ENCODE measurements at regions of chr5 and their contacts with region 1.

Region 1: GRCh38 chr5:127517480-127518318 is at the start of gene PRRC1:
- DNase-seq: peak; percentile 90
- ATAC-seq: peak; percentile 95
- H3K4me3 Mint-ChIP-seq: peak within 1 kb of the TSS; percentile 80
- H3K27ac Mint-ChIP-seq: peak within 1 kb of the TSS; percentile 77
- H3K4me1 Mint-ChIP-seq: peaks cover 28% of the 10 kb centered on the region
- H3K27me3 Mint-ChIP-seq: no peaks in the 10 kb centered on the region
- total RNA-seq, gene PRRC1: 35.8 to 47.1 TPM

Region 2: DNA sequence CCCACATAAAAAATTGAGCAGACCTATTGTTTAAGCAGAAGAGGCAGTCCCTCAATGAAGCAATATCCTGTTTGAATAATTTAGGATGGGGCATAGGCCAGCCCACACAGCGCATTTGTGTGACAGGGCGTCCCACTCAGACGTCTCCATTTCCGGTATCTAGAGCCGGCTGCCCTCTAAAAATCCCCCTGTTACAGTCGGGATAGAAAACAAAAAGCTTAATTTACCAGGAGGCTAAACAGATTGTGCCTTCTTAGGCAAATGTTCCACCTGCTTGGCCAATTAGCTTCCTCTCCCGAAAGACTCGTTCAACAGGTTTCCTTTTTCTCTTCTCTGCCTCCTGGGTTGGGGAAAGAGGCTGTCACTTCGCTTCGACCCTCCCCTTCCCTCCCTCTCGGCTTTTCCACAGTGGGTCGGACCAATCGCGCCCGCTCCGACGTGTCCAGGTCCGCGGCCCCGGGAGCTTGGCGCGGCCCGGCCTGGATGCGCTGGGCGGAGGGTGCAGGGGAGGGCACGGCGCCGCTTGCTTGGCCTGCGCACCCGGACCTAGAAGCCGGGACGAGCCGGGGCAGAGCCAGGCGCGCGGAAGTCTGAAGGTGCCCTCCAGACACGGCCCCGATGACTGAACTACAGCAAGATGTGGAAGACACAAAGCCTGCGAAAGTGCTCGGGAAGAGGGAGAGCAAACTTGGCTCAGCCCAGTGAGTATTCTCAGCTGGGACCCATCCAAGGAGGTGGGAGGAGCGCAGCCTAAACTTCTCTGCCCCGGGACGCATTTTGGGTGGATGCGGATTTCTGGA is 1094.5 kb before region 1 on chr5 and contains the start of gene GRAMD2B:
- CTCF ChIA-PET with region 1: no interaction called
- POLR2A ChIA-PET with region 1: no interaction called
- intact Hi-C with region 1: loop called in 1 of 2 experiments (anchors 5 kb)
- DNase-seq: peak; percentile 82
- ATAC-seq: peak; percentile 86
- H3K4me3 Mint-ChIP-seq: peak within 1 kb of the TSS; percentile 87
- H3K27ac Mint-ChIP-seq: peak within 1 kb of the TSS; percentile 90
- H3K4me1 Mint-ChIP-seq: peaks cover 40% of the 10 kb centered on the region
- H3K27me3 Mint-ChIP-seq: no peaks in the 10 kb centered on the region
- total RNA-seq, gene GRAMD2B: 9.7 to 13.9 TPM

Region 3: DNA sequence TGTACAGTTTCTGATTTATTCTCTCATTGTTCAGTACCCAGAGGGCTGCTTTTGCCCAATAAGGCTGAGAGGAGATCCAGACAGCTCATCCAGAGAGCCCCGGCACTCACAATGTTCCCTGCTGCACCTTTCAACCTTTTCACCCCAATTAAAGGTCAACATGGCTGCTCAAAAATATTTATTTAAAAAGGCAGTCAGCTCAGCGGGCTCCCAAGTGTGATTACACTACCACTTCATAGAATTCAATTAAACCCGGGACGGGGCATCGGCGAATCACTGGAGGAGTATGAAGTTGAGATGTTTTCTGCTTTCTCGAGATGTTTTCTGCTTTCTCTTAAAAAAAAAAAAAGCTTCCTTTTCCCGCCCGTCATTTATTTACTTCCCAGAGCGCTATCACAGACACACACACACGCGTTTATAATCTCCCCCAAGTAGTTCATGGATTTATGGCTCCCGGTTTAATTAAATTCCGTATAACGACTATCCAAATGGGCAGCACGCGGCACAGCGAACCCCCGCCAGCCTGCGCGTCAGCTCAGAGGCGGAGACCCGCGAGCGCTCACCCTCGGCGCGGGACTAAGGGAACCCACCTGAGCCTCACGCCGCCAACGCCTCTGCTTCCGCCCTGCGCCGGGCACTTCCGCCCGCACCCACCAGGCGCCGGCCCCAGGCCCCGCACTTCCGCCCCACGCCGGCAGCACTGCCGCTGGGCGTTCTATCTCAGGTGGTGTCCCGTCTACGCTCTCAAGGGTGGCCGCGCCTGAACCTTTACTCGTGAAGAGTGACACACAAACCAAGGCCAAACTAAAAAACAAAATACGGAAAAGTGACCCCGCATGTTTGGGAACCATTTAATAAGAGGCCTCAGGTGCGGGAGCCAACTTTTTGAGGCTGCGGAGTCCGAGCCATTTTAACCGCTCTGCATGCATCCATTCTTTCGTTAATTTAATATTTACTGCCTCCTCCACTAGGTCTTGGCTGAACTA is 444.5 kb before region 1 on chr5 and contains the start of gene C5orf63:
- CTCF ChIA-PET with region 1: no interaction called
- POLR2A ChIA-PET with region 1: no interaction called
- intact Hi-C with region 1: loop called in 1 of 2 experiments (anchors 2 kb)
- DNase-seq: peak; percentile 87
- ATAC-seq: peak; percentile 98
- H3K4me3 Mint-ChIP-seq: peak within 1 kb of the TSS; percentile 86
- H3K27ac Mint-ChIP-seq: peak within 1 kb of the TSS; percentile 97
- H3K4me1 Mint-ChIP-seq: peaks cover 9% of the 10 kb centered on the region
- H3K27me3 Mint-ChIP-seq: no peaks in the 10 kb centered on the region
- total RNA-seq, gene C5orf63: 12.0 to 14.2 TPM

Region 4: DNA sequence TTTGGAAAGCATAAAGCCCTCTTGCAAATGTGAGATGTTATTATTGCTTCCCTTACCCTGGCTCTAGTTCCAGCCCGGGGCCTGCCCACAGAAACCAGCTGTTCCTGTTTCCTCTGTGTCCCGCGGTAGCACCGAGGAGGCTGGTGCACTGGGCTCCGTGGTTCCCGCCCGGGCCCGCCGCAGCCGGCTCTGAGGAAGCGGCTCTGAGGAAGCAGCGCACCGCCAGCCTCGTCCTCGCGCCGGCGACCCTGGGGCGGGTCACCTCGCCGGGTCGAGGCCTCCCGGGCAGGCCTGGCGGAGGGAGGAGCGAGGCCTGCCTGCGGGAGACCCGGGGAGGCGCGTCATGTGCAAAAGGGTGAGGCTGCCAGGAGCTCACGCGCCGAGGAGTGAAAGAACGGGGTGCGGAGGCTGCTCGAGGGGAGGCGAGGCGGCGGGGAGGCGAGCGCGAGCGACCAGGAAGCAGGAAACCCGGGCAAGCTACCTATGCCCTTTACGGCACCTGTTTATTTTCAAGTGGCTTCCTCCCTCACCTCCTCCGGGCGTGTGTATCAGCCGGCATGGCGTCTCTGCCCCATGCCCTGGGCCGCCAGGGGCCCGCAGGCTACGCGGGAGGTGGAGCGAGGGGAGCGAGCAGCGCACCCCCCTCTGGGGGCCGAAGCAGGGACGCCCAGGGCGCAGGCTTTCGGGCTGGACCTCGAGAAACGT is 288.4 kb before region 1 on chr5:
- CTCF ChIA-PET with region 1: no interaction called
- POLR2A ChIA-PET with region 1: no interaction called
- intact Hi-C with region 1: loop called in 1 of 2 experiments (anchors 2 kb)
- DNase-seq: peak; percentile 68
- ATAC-seq: peak; percentile 83
- H3K4me3 Mint-ChIP-seq: peak overlapping the region; percentile 56
- H3K27ac Mint-ChIP-seq: peak overlapping the region; percentile 44
- H3K4me1 Mint-ChIP-seq: peaks cover 18% of the 10 kb centered on the region
- H3K27me3 Mint-ChIP-seq: no peaks in the 10 kb centered on the region

Region 5: GRCh38 chr5:127423173-127423798 is 94.4 kb before region 1 on chr5:
- CTCF ChIA-PET with region 1: no interaction called
- POLR2A ChIA-PET with region 1: no interaction called
- intact Hi-C with region 1: no loop called
- DNase-seq: no peak
- ATAC-seq: peak; percentile 30
- H3K4me3 Mint-ChIP-seq: no peak overlapping the region
- H3K27ac Mint-ChIP-seq: no peak overlapping the region
- H3K4me1 Mint-ChIP-seq: peaks cover 1% of the 10 kb centered on the region
- H3K27me3 Mint-ChIP-seq: no peaks in the 10 kb centered on the region

Region 6: GRCh38 chr5:127639828-127640227 is 122.1 kb after region 1 on chr5:
- CTCF ChIA-PET with region 1: no interaction called
- POLR2A ChIA-PET with region 1: no interaction called
- intact Hi-C with region 1: no loop called
- DNase-seq: no peak
- ATAC-seq: no peak
- H3K4me3 Mint-ChIP-seq: no peak overlapping the region
- H3K27ac Mint-ChIP-seq: no peak overlapping the region
- H3K4me1 Mint-ChIP-seq: no peaks in the 10 kb centered on the region
- H3K27me3 Mint-ChIP-seq: peaks cover 13% of the 10 kb centered on the region

Region 7: DNA sequence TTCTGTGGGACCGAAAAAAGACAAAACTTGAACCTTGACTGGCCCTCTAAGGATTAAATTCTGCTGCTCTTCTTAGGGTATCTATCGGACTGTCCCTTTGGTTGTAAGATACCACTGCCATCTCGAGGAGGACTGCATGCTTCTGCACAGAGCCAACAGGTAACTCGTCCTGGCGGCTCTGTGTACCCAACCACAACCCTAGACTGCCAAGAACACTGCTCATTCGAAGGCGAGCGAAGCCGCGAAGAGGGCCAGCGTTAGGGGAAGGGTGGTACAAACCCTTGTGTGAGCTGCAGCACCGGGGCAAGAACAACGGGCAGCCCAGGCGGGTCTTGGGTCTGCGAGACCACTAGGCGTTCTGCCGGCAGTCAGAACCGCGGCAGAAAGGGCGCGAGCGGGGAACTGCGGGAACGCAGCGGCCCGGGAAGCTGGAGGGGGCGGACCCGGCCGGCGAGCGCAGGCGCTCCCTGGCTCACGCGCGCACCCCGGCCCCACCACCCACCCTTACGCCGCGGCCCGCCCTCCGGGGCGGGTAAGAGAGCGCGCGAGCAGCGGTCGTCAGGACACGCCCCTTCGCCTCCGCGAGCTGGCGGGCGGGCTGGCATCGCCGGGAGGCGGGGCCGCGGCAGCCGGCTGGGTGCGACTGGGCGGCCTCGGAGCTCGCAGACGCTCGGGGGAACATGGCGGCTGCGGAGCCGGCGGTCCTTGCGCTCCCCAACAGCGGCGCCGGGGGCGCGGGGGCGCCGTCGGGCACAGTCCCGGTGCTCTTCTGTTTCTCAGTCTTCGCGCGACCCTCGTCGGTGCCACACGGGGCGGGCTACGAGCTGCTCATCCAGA is 1576.6 kb after region 1 on chr5 and contains the start of gene ISOC1:
- CTCF ChIA-PET with region 1: no interaction called
- POLR2A ChIA-PET with region 1: no interaction called
- intact Hi-C with region 1: loop called in 1 of 2 experiments (anchors 5 kb)
- DNase-seq: peak; percentile 95
- ATAC-seq: peak; percentile 94
- H3K4me3 Mint-ChIP-seq: peak within 1 kb of the TSS; percentile 79
- H3K27ac Mint-ChIP-seq: peak within 1 kb of the TSS; percentile 37
- H3K4me1 Mint-ChIP-seq: peaks cover 25% of the 10 kb centered on the region
- H3K27me3 Mint-ChIP-seq: peaks cover 8% of the 10 kb centered on the region
- total RNA-seq, gene ISOC1: 21.5 to 25.3 TPM